ENCODE measurements at regions of chr16 and their contacts with region 1.

Region 1: DNA sequence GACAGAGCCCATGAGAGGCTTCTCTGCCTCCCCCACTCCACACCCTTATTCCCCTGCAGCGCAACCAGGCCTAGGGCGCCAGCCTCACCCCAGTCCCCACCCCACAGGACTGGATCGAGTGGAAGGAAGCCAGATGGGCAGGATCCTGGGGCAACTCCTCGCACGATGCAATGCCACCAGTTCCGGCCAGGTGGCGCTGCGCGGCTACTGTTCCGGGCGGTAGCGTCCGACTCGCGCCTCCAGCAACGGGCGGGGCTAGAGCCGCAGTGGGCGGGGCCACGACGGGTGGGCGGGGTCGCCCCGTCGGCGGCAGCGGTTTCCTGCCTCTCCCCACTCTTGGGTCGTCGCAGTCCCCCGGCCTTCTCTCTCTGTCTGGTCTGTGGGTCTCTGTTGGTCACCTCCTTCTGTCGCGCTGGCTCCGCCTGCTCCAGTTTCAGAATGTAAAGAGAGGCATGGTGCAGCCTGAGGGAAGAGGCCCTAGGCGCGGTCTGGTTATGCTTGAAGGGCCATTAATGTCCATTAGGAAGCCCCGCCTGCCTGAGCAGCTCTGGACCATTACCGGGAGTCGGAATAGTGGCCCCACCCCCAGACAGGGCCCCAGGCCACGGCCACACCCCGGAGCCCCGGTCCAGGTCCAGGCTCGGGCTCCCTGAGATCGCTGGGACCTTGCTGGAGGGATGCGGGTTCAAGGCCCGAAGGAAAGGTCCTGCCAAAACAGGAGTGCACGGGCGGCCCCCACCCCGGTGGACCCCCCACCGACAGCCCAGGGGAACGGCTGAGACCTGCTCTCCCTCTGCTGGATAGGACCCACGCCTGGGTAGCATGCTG is 3.4 kb upstream of the NHERF2 start:
- DNase-seq: peak; percentile 94
- H3K4me3 Mint-ChIP-seq: peak overlapping the region; percentile 55
- H3K27ac Mint-ChIP-seq: peak overlapping the region; percentile 67
- H3K4me1 Mint-ChIP-seq: peaks cover 28% of the 10 kb centered on the region
- H3K27me3 Mint-ChIP-seq: peaks cover 44% of the 10 kb centered on the region

Region 2: GRCh38 chr16:1923299-1924034 is 99.8 kb before region 1 on chr16:
- CTCF ChIA-PET with region 1: no interaction called
- POLR2A ChIA-PET with region 1: no interaction called
- DNase-seq: no peak
- H3K4me3 Mint-ChIP-seq: no peak overlapping the region
- H3K27ac Mint-ChIP-seq: no peak overlapping the region
- H3K4me1 Mint-ChIP-seq: peaks cover 2% of the 10 kb centered on the region
- H3K27me3 Mint-ChIP-seq: peaks cover 49% of the 10 kb centered on the region

Region 3: GRCh38 chr16:2147981-2148671 is 124.8 kb after region 1 on chr16 and contains the start of gene RAB26:
- CTCF ChIA-PET with region 1: interaction called, 13 read pairs
- POLR2A ChIA-PET with region 1: no interaction called
- DNase-seq: peak; percentile 54
- H3K4me3 Mint-ChIP-seq: peak within 1 kb of the TSS; percentile 7
- H3K27ac Mint-ChIP-seq: no peak within 1 kb of the TSS
- H3K4me1 Mint-ChIP-seq: peaks cover 17% of the 10 kb centered on the region
- H3K27me3 Mint-ChIP-seq: no peaks in the 10 kb centered on the region
- total RNA-seq, gene RAB26: 0.20 to 0.42 TPM

Measured in activated CD4-positive, alpha-beta T cell treated with anti-CD3 and anti-CD28 coated beads, Interleukin-2, amount 10 ng/mL, durations not matched to agents 7 days and 5 days (primary cell).